Naive thymus-derived CD8-positive, alpha-beta T cell (primary cell): ENCODE measurements at regions of chr6 and their contacts with region 1.

Region 1: DNA sequence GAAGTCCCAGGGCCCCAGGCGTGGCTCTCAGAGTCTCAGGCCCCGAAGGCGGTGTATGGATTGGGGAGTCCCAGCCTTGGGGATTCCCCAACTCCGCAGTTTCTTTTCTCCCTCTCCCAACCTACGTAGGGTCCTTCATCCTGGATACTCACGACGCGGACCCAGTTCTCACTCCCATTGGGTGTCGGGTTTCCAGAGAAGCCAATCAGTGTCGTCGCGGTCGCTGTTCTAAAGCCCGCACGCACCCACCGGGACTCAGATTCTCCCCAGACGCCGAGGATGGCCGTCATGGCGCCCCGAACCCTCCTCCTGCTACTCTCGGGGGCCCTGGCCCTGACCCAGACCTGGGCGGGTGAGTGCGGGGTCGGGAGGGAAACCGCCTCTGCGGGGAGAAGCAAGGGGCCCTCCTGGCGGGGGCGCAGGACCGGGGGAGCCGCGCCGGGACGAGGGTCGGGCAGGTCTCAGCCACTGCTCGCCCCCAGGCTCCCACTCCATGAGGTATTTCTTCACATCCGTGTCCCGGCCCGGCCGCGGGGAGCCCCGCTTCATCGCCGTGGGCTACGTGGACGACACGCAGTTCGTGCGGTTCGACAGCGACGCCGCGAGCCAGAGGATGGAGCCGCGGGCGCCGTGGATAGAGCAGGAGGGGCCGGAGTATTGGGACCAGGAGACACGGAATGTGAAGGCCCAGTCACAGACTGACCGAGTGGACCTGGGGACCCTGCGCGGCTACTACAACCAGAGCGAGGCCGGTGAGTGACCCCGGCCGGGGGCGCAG is at the start of gene HLA-A:
- DNase-seq: peak; percentile 84 to 98 (median 93)
- ATAC-seq: peak; percentile 84 to 85
- H3K4me3 Mint-ChIP-seq: peak within 1 kb of the TSS; percentile 91 to 99 (median 98)
- H3K27ac Mint-ChIP-seq: peak within 1 kb of the TSS; percentile 99 to 100 (median 100)
- H3K4me1 Mint-ChIP-seq: peaks cover 28 to 63% (median 53%) of the 10 kb centered on the region in 4 donors
- H3K27me3 Mint-ChIP-seq: peaks cover 0 to 4% (median 0%) of the 10 kb centered on the region in 5 donors
- polyA plus RNA-seq, gene HLA-A: 2,084 to 4,021 (median 2,635) TPM

Region 2: GRCh38 chr6:29926413-29927274 is 15.8 kb before region 1 on chr6:
- POLR2A ChIA-PET with region 1: interaction called, 13 read pairs
- DNase-seq: peak; percentile 66 to 86 (median 77)
- ATAC-seq: peak; percentile 84 to 90
- H3K4me3 Mint-ChIP-seq: peak overlapping the region in 9 of 10 donors; percentile 84 to 99 (median 96)
- H3K27ac Mint-ChIP-seq: peak overlapping the region in 9 of 10 donors; percentile 92 to 100 (median 98)
- H3K4me1 Mint-ChIP-seq: peaks cover 0 to 43% (median 27%) of the 10 kb centered on the region in 4 donors
- H3K27me3 Mint-ChIP-seq: no peaks in the 10 kb centered on the region

Region 3: GRCh38 chr6:29958921-29959320 is 16.5 kb after region 1 on chr6:
- POLR2A ChIA-PET with region 1: interaction called, 68 read pairs
- DNase-seq: no peak
- ATAC-seq: no peak
- H3K4me3 Mint-ChIP-seq: no peak overlapping the region
- H3K27ac Mint-ChIP-seq: peak overlapping the region in 2 of 10 donors; percentile 6 to 38
- H3K4me1 Mint-ChIP-seq: peaks cover 4 to 18% (median 7%) of the 10 kb centered on the region in 4 donors
- H3K27me3 Mint-ChIP-seq: no peaks in the 10 kb centered on the region

Region 4: GRCh38 chr6:29964887-29965562 is 22.6 kb after region 1 on chr6:
- POLR2A ChIA-PET with region 1: interaction called, 68 read pairs
- DNase-seq: peak; percentile 47 to 89 (median 76)
- ATAC-seq: peak; percentile 91 to 96
- H3K4me3 Mint-ChIP-seq: peak overlapping the region; percentile 66 to 93 (median 84)
- H3K27ac Mint-ChIP-seq: peak overlapping the region; percentile 60 to 98 (median 93)
- H3K4me1 Mint-ChIP-seq: peaks cover 26 to 45% (median 42%) of the 10 kb centered on the region in 4 donors
- H3K27me3 Mint-ChIP-seq: no peaks in the 10 kb centered on the region

Region 5: DNA sequence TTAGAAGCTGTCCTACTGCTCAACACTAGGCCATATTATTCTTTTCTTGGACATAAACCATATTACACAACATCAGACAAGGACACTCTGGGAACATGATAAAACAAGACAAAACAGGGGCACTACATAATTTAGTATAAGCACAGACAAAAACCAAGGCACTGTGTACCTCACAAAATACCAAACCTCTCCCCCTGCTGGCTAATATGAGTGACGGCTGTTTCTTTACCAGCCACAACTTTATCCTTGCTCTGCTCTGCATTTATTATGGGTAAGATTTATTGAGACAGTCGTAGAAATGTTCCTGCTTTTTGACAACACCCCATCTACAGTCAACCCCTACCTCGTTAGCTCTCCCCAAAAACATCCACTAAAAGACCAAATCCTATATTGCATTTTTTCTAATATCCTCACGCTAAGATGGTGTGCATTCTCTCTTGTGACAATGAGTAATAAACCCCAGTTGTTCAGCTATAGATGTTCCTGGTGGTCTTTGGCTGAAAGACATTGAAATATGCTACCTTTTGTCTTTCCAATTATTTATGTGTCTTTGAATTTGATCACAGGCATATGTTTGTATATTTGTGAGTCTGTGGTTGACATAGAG is 94.8 kb after region 1 on chr6:
- POLR2A ChIA-PET with region 1: no interaction called
- DNase-seq: peak in 1 of 10 donors; percentile 15
- ATAC-seq: peak in 1 of 2 donors; percentile 57
- H3K4me3 Mint-ChIP-seq: no peak overlapping the region
- H3K27ac Mint-ChIP-seq: peak overlapping the region in 2 of 10 donors; percentile 19 to 42
- H3K4me1 Mint-ChIP-seq: peaks cover 0 to 5% (median 0%) of the 10 kb centered on the region in 4 donors
- H3K27me3 Mint-ChIP-seq: no peaks in the 10 kb centered on the region

Region 6: GRCh38 chr6:30061092-30061857 is 118.8 kb after region 1 on chr6 and contains the start of gene POLR1H:
- POLR2A ChIA-PET with region 1: interaction called, 18 read pairs
- DNase-seq: peak; percentile 70 to 93 (median 85)
- ATAC-seq: peak; percentile 87 to 93
- H3K4me3 Mint-ChIP-seq: peak within 1 kb of the TSS; percentile 87 to 100 (median 99)
- H3K27ac Mint-ChIP-seq: peak within 1 kb of the TSS; percentile 97 to 100 (median 99)
- H3K4me1 Mint-ChIP-seq: peaks cover 17 to 54% (median 34%) of the 10 kb centered on the region in 4 donors
- H3K27me3 Mint-ChIP-seq: no peaks in the 10 kb centered on the region
- polyA plus RNA-seq, gene POLR1H: 60.8 to 110 (median 93.5) TPM